CD4-positive, alpha-beta memory T cell (primary cell): ENCODE measurements at regions of chr16 and their contacts with region 1.

Region 1: DNA sequence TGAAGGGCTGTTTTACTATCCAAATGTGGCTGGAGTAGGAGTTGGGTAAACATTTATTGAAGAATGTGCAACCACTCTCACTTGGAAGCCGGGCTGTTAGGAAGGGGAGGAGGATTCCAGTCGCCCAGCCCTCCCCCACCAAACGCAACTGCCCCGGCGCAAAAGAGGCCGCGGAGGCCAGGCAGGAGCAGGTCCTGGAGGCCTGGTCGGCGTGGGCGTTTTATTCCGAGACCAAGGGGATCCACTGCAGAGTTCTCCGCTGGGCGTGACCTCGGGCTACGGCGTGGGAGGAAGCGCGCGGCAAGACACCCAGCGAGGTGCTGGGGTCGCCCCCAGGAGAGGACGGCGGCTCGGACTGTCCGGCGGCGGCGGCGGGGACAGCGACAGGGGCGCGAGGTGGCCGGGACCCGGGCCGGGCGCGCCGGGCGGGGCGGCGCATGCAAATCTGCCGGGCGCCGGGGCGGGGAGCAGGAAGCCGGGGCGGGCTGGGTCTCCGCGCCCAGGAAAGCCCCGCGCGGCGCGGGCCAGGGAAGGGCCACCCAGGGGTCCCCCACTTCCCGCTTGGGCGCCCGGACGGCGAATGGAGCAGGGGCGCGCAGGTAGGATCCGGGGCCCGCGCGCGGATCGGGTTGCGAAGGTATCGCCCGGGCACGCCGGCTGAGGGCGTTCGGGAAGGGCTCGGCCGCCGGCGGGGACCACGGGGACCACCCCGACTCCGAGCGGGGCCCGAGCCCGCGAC is at the start of gene IL4R:
- DNase-seq: peak; percentile 66 to 77 (median 69)
- H3K4me3 ChIP-seq: peak within 1 kb of the TSS; percentile 76 to 92
- H3K4me3 Mint-ChIP-seq: peak within 1 kb of the TSS; percentile 89 to 98 (median 94)
- H3K27ac ChIP-seq: peak within 1 kb of the TSS; percentile 96
- H3K27ac Mint-ChIP-seq: peak within 1 kb of the TSS; percentile 94 to 99 (median 99)
- H3K4me1 ChIP-seq: peaks cover 47% of the 10 kb centered on the region
- H3K4me1 Mint-ChIP-seq: peaks cover 30 to 53% (median 42%) of the 10 kb centered on the region in 4 donors
- H3K27me3 ChIP-seq: no peaks in the 10 kb centered on the region
- H3K27me3 Mint-ChIP-seq: no peaks in the 10 kb centered on the region
- total RNA-seq, gene IL4R: 143 to 152 TPM

Region 2: GRCh38 chr16:27268376-27269299 is 45.0 kb before region 1 on chr16 and contains the start of gene NSMCE1:
- CTCF ChIA-PET with region 1: no interaction called
- POLR2A ChIA-PET with region 1: interaction called, 9 read pairs
- intact Hi-C with region 1: loop called (anchors 10 kb)
- DNase-seq: peak; percentile 92 to 94 (median 93)
- H3K4me3 ChIP-seq: peak within 1 kb of the TSS; percentile 74 to 89
- H3K4me3 Mint-ChIP-seq: peak within 1 kb of the TSS; percentile 95 to 100 (median 98)
- H3K27ac ChIP-seq: peak within 1 kb of the TSS; percentile 86
- H3K27ac Mint-ChIP-seq: peak within 1 kb of the TSS; percentile 94 to 99 (median 99)
- H3K4me1 ChIP-seq: peaks cover 23% of the 10 kb centered on the region
- H3K4me1 Mint-ChIP-seq: peaks cover 21 to 63% (median 47%) of the 10 kb centered on the region in 4 donors
- H3K27me3 ChIP-seq: no peaks in the 10 kb centered on the region
- H3K27me3 Mint-ChIP-seq: no peaks in the 10 kb centered on the region
- total RNA-seq, gene NSMCE1: 66.6 to 70.7 TPM

Region 3: GRCh38 chr16:27284865-27285675 is 28.5 kb before region 1 on chr16:
- CTCF ChIA-PET with region 1: interaction called, 3 read pairs
- POLR2A ChIA-PET with region 1: no interaction called
- intact Hi-C with region 1: loop called (anchors 5 kb)
- DNase-seq: no peak
- H3K4me3 ChIP-seq: no peak overlapping the region
- H3K4me3 Mint-ChIP-seq: no peak overlapping the region
- H3K27ac ChIP-seq: no peak overlapping the region
- H3K27ac Mint-ChIP-seq: peak overlapping the region in 4 of 7 donors; percentile 30 to 72 (median 39)
- H3K4me1 ChIP-seq: peaks cover 16% of the 10 kb centered on the region
- H3K4me1 Mint-ChIP-seq: peaks cover 22 to 44% (median 33%) of the 10 kb centered on the region in 4 donors
- H3K27me3 ChIP-seq: no peaks in the 10 kb centered on the region
- H3K27me3 Mint-ChIP-seq: no peaks in the 10 kb centered on the region

Region 4: DNA sequence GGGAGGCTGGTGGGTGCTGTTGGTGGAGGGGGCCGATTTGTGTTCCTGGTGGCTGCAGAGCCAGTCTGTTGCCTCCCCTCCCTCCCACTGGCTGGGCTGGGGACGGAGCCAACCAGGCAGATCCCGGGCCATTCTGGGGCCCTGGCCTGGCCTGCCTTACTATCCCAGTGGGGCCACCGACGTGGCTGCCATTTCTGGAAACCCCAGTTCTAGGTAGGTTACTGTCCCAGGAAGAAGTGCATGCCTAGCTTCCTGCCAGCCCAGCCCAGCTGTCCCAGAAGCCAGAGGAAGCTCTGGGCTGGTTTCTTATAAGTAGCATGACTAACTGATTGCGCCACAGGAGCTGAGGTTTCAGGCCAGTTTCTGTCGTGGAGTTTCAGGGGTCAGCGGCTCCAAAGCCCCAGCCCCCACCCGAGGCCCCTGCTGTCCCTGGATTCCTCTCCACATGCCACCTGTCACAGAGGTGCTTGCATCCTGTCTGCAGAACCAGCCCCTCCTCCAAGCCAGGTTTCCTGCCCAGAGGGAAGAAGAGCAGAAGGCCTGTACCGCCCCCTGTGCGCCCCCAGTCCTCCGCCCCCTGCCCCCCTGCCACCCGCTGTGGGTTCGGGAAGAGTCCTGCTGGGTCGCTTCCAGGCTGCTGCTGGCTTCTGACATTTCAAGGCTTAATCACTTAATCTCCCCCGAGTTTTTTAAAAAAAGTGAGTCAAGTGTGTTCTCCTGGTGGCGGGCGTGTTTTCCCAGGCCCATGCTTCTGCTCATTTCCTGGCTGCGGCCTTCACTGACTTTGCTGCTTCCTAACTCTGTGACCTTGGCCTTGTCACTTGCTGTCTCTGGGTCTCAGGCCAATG is 13.4 kb after region 1 on chr16:
- CTCF ChIA-PET with region 1: interaction called, 11 read pairs
- POLR2A ChIA-PET with region 1: interaction called, 35 read pairs
- intact Hi-C with region 1: no loop called
- DNase-seq: peak in 3 of 5 donors; percentile 24 to 47 (median 31)
- H3K4me3 ChIP-seq: no peak overlapping the region
- H3K4me3 Mint-ChIP-seq: peak overlapping the region; percentile 48 to 76 (median 64)
- H3K27ac ChIP-seq: peak overlapping the region; percentile 34
- H3K27ac Mint-ChIP-seq: peak overlapping the region; percentile 64 to 95 (median 85)
- H3K4me1 ChIP-seq: peaks cover 86% of the 10 kb centered on the region
- H3K4me1 Mint-ChIP-seq: peaks cover 45 to 92% (median 75%) of the 10 kb centered on the region in 4 donors
- H3K27me3 ChIP-seq: no peaks in the 10 kb centered on the region
- H3K27me3 Mint-ChIP-seq: no peaks in the 10 kb centered on the region